CD8-positive, alpha-beta T cell (primary cell): ENCODE measurements at regions of chr2 and their contacts with region 1.

Region 1: GRCh38 chr2:230712443-230713330 is at the start of gene CAB39:
- DNase-seq: peak; percentile 76 to 95 (median 86)
- ATAC-seq: peak; percentile 87
- H3K4me3 ChIP-seq: peak within 1 kb of the TSS; percentile 76 to 79
- H3K4me3 Mint-ChIP-seq: peak within 1 kb of the TSS; percentile 95
- H3K27ac ChIP-seq: peak within 1 kb of the TSS; percentile 65 to 79
- H3K27ac Mint-ChIP-seq: peak within 1 kb of the TSS; percentile 97
- H3K4me1 ChIP-seq: peaks cover 30% of the 10 kb centered on the region
- H3K4me1 Mint-ChIP-seq: peaks cover 44% of the 10 kb centered on the region
- H3K27me3 ChIP-seq: no peaks in the 10 kb centered on the region
- H3K27me3 Mint-ChIP-seq: no peaks in the 10 kb centered on the region
- CTCF ChIP-seq: peak; percentile 76
- total RNA-seq, gene CAB39: 36.4 to 42.6 TPM

Region 2: GRCh38 chr2:230326453-230327417 is 386.0 kb before region 1 on chr2 and contains the start of gene SP140L:
- CTCF ChIA-PET with region 1: no interaction called
- POLR2A ChIA-PET with region 1: no interaction called
- intact Hi-C with region 1: loop called in 1 of 2 experiments (anchors 10 kb)
- DNase-seq: peak; percentile 56 to 91 (median 82)
- ATAC-seq: peak; percentile 100
- H3K4me3 ChIP-seq: peak within 1 kb of the TSS; percentile 63 to 80
- H3K4me3 Mint-ChIP-seq: peak within 1 kb of the TSS; percentile 96
- H3K27ac ChIP-seq: peak within 1 kb of the TSS; percentile 88 to 90
- H3K27ac Mint-ChIP-seq: peak within 1 kb of the TSS; percentile 99
- H3K4me1 ChIP-seq: peaks cover 44% of the 10 kb centered on the region
- H3K4me1 Mint-ChIP-seq: peaks cover 80% of the 10 kb centered on the region
- H3K27me3 ChIP-seq: no peaks in the 10 kb centered on the region
- H3K27me3 Mint-ChIP-seq: no peaks in the 10 kb centered on the region
- CTCF ChIP-seq: no peak
- total RNA-seq, gene SP140L: 69.8 to 70.5 TPM

Region 3: DNA sequence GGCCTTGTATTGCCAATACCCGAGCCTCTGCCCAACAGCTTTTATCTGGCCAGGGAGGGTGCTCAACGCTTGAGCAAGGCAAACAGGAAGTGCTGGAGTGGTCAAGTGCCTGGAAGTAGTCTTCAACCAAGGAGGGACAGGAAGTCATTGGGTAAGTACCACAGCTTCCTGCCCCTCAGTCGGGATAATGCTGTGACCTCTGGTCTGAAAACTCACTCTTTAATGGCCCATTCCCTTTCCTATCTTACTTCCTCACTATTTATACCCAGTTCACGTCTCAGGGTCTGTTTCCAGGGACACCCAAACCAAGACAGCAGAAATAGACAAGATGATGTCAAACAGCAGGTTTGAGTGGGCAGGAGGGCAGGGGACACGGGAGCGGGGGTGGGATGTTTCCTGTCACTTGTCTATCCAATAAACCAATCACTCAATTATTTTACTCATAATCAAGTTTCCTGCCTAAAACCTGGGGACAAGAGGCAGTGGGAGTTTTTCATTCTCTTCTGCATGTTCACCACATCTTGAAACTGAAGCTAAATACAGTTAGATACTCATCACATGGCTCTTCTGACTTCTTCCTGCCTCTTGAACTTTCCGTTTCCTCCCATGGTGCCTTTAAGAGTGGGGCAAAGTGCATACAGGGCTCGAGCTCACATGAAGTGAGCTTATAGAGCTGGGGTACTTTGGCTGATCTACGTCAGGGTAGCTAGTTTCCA is 69.0 kb before region 1 on chr2:
- CTCF ChIA-PET with region 1: interaction called, 11 read pairs
- POLR2A ChIA-PET with region 1: interaction called, 4 read pairs
- intact Hi-C with region 1: no loop called
- DNase-seq: peak in 4 of 9 experiments; percentile 48 to 76 (median 54)
- ATAC-seq: peak; percentile 98
- H3K4me3 ChIP-seq: peak overlapping the region in 1 of 2 experiments; percentile 28
- H3K4me3 Mint-ChIP-seq: peak overlapping the region; percentile 59
- H3K27ac ChIP-seq: peak overlapping the region; percentile 57 to 87
- H3K27ac Mint-ChIP-seq: peak overlapping the region; percentile 85
- H3K4me1 ChIP-seq: peaks cover 25% of the 10 kb centered on the region
- H3K4me1 Mint-ChIP-seq: peaks cover 24% of the 10 kb centered on the region
- H3K27me3 ChIP-seq: no peaks in the 10 kb centered on the region
- H3K27me3 Mint-ChIP-seq: no peaks in the 10 kb centered on the region
- CTCF ChIP-seq: no peak

Region 4: DNA sequence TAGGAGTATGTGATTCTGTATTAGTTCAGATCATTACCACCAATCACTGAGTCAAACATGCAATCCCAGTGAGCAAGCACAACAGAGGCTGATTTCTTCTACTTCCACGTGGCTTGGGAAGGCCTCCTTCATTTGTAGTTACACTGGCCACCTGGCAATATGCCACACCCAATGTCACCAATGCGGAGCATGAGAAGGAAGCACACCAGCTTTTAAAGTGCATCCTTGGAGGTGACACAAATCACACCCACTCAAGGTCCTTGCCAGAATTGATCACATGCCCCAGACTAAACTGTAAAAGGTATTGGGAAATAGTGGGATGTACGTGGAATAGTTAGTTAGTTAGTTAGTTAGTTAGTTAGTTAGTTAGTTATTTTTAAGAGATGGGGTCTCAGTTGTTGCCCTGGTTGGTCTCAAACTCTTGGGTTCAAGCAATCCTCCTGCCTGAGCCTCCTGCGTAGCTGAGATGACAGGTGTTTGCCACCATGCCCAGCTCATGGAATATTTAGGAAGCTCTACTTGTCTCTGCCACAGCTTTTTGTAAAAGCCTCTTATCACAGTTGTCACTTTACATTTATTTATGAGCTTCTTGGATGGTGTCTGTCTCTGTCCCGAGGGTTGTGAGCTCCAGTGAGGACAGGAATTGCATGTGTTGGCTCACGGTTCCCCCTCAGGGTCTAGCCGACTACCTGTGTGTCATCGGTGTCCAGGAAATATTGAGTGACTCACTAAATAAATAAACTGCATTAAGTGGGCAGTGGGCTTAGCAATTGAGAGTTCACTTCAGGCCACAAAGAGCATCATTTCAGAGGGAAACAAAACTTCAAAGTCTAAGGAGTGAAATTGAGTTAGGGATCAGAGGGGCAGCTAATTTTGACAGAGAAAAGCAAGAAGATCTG is 28.2 kb before region 1 on chr2:
- CTCF ChIA-PET with region 1: no interaction called
- POLR2A ChIA-PET with region 1: no interaction called
- intact Hi-C with region 1: no loop called
- DNase-seq: no peak
- ATAC-seq: no peak
- H3K4me3 ChIP-seq: no peak overlapping the region
- H3K4me3 Mint-ChIP-seq: no peak overlapping the region
- H3K27ac ChIP-seq: no peak overlapping the region
- H3K27ac Mint-ChIP-seq: no peak overlapping the region
- H3K4me1 ChIP-seq: no peaks in the 10 kb centered on the region
- H3K4me1 Mint-ChIP-seq: peaks cover 3% of the 10 kb centered on the region
- H3K27me3 ChIP-seq: no peaks in the 10 kb centered on the region
- H3K27me3 Mint-ChIP-seq: no peaks in the 10 kb centered on the region
- CTCF ChIP-seq: no peak

Region 5: DNA sequence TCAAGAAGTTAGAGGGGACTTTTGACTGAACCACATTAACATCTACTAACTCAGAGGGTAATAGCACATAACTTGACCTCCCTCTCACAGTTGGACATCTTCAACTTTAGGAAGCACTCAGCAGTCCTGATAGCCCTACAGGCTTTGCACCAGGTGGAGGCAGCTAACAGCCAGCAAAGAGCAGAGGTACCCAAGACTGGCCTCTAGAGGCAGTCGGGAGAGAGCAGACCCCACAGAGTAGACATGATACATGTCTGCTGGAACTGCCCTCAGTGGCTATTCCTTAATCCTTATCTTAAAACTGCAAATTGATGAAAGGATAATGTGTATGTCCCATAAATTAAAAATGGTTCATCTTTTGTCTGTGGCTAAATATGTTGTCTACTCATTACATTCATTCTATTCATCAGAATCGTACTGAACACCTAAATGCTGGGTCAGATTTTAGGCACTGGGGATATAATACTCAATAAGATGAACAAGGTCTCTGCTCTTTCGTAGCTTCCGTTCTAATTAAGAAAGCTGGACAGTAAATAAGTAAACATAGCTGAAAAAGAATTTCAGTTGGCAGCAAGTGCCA is 49.7 kb after region 1 on chr2:
- CTCF ChIA-PET with region 1: interaction called, 17 read pairs
- POLR2A ChIA-PET with region 1: interaction called, 6 read pairs
- intact Hi-C with region 1: loop called (anchors 2 to 5 kb)
- DNase-seq: peak in 6 of 9 experiments; percentile 33 to 64 (median 47)
- ATAC-seq: peak; percentile 96
- H3K4me3 ChIP-seq: no peak overlapping the region
- H3K4me3 Mint-ChIP-seq: no peak overlapping the region
- H3K27ac ChIP-seq: no peak overlapping the region
- H3K27ac Mint-ChIP-seq: no peak overlapping the region
- H3K4me1 ChIP-seq: peaks cover 26% of the 10 kb centered on the region
- H3K4me1 Mint-ChIP-seq: peaks cover 61% of the 10 kb centered on the region
- H3K27me3 ChIP-seq: no peaks in the 10 kb centered on the region
- H3K27me3 Mint-ChIP-seq: no peaks in the 10 kb centered on the region
- CTCF ChIP-seq: peak; percentile 60

Region 6: GRCh38 chr2:230793572-230794359 is 81.1 kb after region 1 on chr2:
- CTCF ChIA-PET with region 1: interaction called, 25 read pairs
- POLR2A ChIA-PET with region 1: interaction called, 16 read pairs
- intact Hi-C with region 1: loop called in 1 of 2 experiments (anchors 1 kb)
- DNase-seq: peak; percentile 39 to 94 (median 71)
- ATAC-seq: peak; percentile 92
- H3K4me3 ChIP-seq: peak overlapping the region in 1 of 2 experiments; percentile 17
- H3K4me3 Mint-ChIP-seq: peak overlapping the region; percentile 66
- H3K27ac ChIP-seq: peak overlapping the region; percentile 30 to 60
- H3K27ac Mint-ChIP-seq: peak overlapping the region; percentile 89
- H3K4me1 ChIP-seq: peaks cover 43% of the 10 kb centered on the region
- H3K4me1 Mint-ChIP-seq: peaks cover 50% of the 10 kb centered on the region
- H3K27me3 ChIP-seq: no peaks in the 10 kb centered on the region
- H3K27me3 Mint-ChIP-seq: no peaks in the 10 kb centered on the region
- CTCF ChIP-seq: no peak

Region 7: GRCh38 chr2:231212329-231212845 is 499.7 kb after region 1 on chr2:
- CTCF ChIA-PET with region 1: no interaction called
- POLR2A ChIA-PET with region 1: no interaction called
- intact Hi-C with region 1: no loop called
- DNase-seq: no peak
- ATAC-seq: no peak
- H3K4me3 ChIP-seq: no peak overlapping the region
- H3K4me3 Mint-ChIP-seq: no peak overlapping the region
- H3K27ac ChIP-seq: no peak overlapping the region
- H3K27ac Mint-ChIP-seq: no peak overlapping the region
- H3K4me1 ChIP-seq: no peaks in the 10 kb centered on the region
- H3K4me1 Mint-ChIP-seq: no peaks in the 10 kb centered on the region
- H3K27me3 ChIP-seq: no peaks in the 10 kb centered on the region
- H3K27me3 Mint-ChIP-seq: no peaks in the 10 kb centered on the region
- CTCF ChIP-seq: no peak